ENCODE measurements at regions of chr4 and their contacts with region 1.

Region 1: DNA sequence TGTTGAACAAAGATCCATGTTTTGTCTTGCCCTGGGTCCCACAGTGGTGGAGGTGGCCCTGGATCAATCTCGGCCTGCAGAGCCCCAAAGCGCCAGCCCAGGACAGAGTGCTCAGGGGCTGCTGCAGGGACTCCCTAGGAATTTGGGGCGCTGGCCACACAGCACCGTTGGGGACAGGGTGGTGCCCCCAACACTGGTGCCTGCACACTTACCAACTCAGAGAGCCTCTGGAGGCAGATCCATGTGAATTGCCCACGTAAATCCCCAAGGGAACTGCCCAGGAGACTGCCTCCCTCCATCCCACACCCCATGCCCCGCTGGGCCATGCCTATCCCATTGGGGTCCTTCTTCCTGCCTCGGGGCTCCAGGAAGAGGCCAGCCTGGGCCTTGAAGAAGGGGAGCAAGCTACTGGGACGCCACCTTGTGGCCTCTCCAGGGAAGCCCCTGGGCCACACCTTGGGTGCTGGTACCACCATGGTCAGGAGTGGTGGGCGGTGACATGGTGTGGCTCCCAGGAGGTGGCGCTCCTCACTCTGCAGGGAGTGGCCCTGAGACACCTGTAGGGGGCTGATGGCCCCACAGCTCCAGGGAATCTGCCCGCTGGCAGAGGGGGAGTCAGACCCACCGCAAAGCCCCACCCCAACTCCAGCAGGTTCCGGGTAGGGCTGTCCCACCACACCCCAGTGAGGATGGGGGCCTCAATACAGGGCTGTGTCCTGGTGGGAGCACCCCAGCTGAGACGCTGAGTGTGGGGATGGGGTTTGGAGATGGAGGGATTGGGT is 22.8 kb downstream of the CFAP99 start:
- H3K4me3 ChIP-seq: no peak overlapping the region
- H3K27ac ChIP-seq: no peak overlapping the region
- H3K4me1 ChIP-seq: no peaks in the 10 kb centered on the region
- CTCF ChIP-seq: peak; percentile 89

Region 2: GRCh38 chr4:2402029-2402428 is 39.6 kb before region 1 on chr4:
- CTCF ChIA-PET with region 1: interaction called, 11 read pairs
- POLR2A ChIA-PET with region 1: no interaction called
- H3K4me3 ChIP-seq: no peak overlapping the region
- H3K27ac ChIP-seq: no peak overlapping the region
- H3K4me1 ChIP-seq: no peaks in the 10 kb centered on the region
- CTCF ChIP-seq: no peak

Region 3: DNA sequence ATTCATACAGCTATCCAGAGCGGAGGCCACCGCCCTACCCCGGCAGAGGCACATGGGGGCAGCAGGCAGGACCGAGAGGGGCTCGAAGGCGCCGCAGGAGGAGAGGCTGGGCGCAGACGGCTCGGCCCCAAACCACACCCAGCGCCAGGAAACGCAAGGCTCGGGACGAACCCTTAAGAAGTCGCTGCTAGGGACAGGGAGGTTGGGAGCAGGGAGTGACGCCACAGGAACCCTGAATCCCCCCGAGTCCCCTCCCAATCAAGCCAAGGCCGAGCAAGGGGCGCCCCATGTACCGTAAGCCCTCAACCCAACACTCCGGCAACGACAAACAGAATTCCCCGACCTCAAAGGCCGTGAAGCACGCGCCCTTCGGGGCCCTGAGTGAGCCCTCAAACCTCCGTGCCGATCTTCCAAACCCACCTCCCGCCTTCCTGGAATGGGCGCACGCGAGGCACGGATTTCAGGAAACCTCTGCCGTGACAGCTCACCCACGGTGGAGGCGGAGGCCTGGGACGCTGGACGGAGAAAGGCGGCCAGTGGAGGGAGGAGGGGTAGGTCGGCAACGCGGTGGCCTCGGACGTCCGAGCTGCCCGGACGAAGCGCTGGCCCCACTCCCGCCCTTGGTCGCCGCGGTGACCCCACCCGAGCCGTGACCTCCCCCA is 24.9 kb before region 1 on chr4:
- CTCF ChIA-PET with region 1: interaction called, 14 read pairs
- POLR2A ChIA-PET with region 1: no interaction called
- H3K4me3 ChIP-seq: no peak overlapping the region
- H3K27ac ChIP-seq: no peak overlapping the region
- H3K4me1 ChIP-seq: 0 out of 2 replicates have a peak, but pooled peaks cover 2% of the 10 kb centered on the region
- CTCF ChIP-seq: no peak

Region 4: DNA sequence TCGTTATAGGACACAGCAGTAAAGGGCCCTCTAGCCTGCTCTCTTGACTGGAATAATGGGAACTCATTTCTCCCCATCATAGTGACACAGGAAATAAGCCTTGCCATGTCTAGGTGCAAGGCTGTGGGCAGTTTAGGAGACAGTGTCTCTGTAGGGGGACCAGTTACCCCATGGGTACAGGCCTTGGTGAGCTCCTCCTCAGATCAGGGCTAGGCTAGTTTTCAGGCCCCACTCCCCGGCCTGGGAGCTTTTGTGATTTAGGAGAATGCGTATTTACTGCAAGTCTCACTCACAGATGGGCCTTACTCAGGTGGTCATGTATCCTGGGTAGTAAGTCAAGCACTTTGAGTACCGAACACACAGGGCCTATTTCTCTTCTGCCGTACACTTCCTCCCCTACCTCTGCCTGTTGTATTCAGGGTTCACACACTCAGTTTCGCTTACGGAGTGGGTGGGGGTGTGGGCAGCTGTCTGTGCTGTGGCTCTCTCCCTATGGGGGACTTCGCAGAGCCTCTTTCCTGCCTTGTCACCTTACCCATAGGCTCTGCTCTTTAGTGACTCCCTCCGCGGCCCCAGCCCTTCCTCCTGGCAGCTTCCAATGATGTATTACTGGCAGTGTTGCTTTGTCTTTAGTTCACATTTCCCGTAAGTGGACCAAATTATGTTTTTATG is 129.1 kb after region 1 on chr4:
- CTCF ChIA-PET with region 1: no interaction called
- POLR2A ChIA-PET with region 1: no interaction called
- H3K4me3 ChIP-seq: no peak overlapping the region
- H3K27ac ChIP-seq: no peak overlapping the region
- H3K4me1 ChIP-seq: no peaks in the 10 kb centered on the region
- CTCF ChIP-seq: no peak

Measured in HEK293 (cell line).